ENCODE measurements at regions of chr3 and their contacts with region 1.

Region 1: GRCh38 chr3:129316131-129317013 is 37.7 kb downstream of the HMCES start:
- DNase-seq: peak; percentile 94
- H3K4me3 ChIP-seq: peak overlapping the region; percentile 89 to 93
- H3K27ac ChIP-seq: peak overlapping the region; percentile 70 to 86
- H3K4me1 ChIP-seq: peaks cover 0 to 21% of the 10 kb centered on the region in 2 experiments; a peak in 2 of 4 replicates
- H3K27me3 ChIP-seq: no peaks in the 10 kb centered on the region
- CTCF ChIP-seq: peak; percentile 65
- EP300 ChIP-seq: no peak
- RAD21 ChIP-seq: peak; percentile 40

Region 2: GRCh38 chr3:129278439-129278970 is 37.9 kb before region 1 on chr3 and contains the start of gene HMCES:
- CTCF ChIA-PET with region 1: interaction called, 9 read pairs
- POLR2A ChIA-PET with region 1: interaction called, 25 read pairs
- DNase-seq: peak; percentile 98
- H3K4me3 ChIP-seq: peak within 1 kb of the TSS; percentile 79 to 84
- H3K27ac ChIP-seq: peak within 1 kb of the TSS; percentile 77 to 87
- H3K4me1 ChIP-seq: peaks cover 11 to 14% of the 10 kb centered on the region in 2 experiments; a peak in 2 of 4 replicates
- H3K27me3 ChIP-seq: no peaks in the 10 kb centered on the region
- CTCF ChIP-seq: no peak
- EP300 ChIP-seq: 0 out of 4 replicates have a peak, but pooled peaks of 1 of the 2 experiments have one; percentile 24
- RAD21 ChIP-seq: no peak
- polyA plus RNA-seq, gene HMCES: 29.0 and 32.4 TPM in 2 replicates

Region 3: GRCh38 chr3:129330409-129330808 is 14.0 kb after region 1 on chr3:
- CTCF ChIA-PET with region 1: interaction called, 13 read pairs
- POLR2A ChIA-PET with region 1: interaction called, 6 read pairs
- DNase-seq: no peak
- H3K4me3 ChIP-seq: no peak overlapping the region
- H3K27ac ChIP-seq: no peak overlapping the region
- H3K4me1 ChIP-seq: no peaks in the 10 kb centered on the region
- H3K27me3 ChIP-seq: no peaks in the 10 kb centered on the region
- CTCF ChIP-seq: no peak
- EP300 ChIP-seq: no peak
- RAD21 ChIP-seq: no peak

Region 4: DNA sequence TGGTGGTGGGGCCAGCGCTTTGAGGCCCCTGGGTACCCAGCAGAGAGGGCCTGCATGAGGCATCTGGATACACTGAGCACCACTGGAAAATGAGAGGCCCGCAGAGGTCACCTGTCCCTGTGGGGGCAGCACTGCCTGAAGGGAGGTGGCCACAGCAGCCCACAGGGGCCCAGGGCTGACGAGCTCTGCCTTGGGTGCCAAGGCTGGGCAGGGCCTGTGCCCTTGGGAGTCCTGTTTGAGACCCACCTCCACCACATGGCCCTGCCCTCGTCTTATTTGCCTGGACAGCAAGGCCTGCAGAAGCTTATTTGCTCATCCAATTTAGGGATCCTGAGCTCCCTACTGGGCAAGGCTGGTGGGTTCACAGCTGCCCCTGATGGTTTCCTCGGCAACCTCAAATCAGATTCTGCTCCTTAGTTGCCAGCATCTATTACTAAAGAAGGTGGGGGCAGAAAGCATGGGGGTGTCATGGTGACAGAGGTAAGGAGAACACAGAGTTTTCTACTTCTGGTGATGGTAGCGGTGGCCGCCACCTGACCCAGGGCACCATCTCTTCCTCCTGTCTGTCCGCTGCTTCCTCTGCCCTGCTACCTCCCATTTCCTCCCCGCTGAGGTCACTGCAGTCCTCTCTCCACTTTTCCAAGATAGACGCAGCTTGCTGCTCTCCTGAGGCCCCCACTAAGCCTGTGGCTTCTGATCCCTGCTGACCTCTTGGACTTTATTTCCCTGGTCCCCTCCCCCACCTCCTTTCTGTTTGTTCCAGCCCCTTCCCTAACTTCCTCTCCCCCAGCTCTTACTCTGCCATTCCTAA is 25.2 kb after region 1 on chr3:
- CTCF ChIA-PET with region 1: no interaction called
- POLR2A ChIA-PET with region 1: no interaction called
- DNase-seq: no peak
- H3K4me3 ChIP-seq: no peak overlapping the region
- H3K27ac ChIP-seq: no peak overlapping the region
- H3K4me1 ChIP-seq: peaks cover 0 to 17% of the 10 kb centered on the region in 2 experiments; a peak in 1 of 4 replicates
- H3K27me3 ChIP-seq: no peaks in the 10 kb centered on the region
- CTCF ChIP-seq: no peak
- EP300 ChIP-seq: no peak
- RAD21 ChIP-seq: no peak

Region 5: GRCh38 chr3:129383292-129383860 is 67.0 kb after region 1 on chr3:
- CTCF ChIA-PET with region 1: interaction called, 7 read pairs
- POLR2A ChIA-PET with region 1: interaction called, 22 read pairs
- DNase-seq: peak; percentile 83
- H3K4me3 ChIP-seq: peak overlapping the region in 1 of 2 experiments; percentile 6; a peak in 1 of 4 replicates
- H3K27ac ChIP-seq: no peak overlapping the region
- H3K4me1 ChIP-seq: peaks cover 0 to 15% of the 10 kb centered on the region in 2 experiments; a peak in 1 of 4 replicates
- H3K27me3 ChIP-seq: no peaks in the 10 kb centered on the region
- CTCF ChIP-seq: peak; percentile 75
- EP300 ChIP-seq: no peak
- RAD21 ChIP-seq: peak; percentile 88

Region 6: GRCh38 chr3:129439817-129440617 is 123.6 kb after region 1 on chr3 and contains the starts of genes IFT122 and MBD4:
- CTCF ChIA-PET with region 1: interaction called, 3 read pairs
- POLR2A ChIA-PET with region 1: interaction called, 12 read pairs
- DNase-seq: peak; percentile 97
- H3K4me3 ChIP-seq: peak within 1 kb of the TSS; percentile 82 to 93
- H3K27ac ChIP-seq: peak within 1 kb of the TSS; percentile 83 to 91
- H3K4me1 ChIP-seq: peaks cover 19 to 31% of the 10 kb centered on the region in 2 experiments; a peak in 3 of 4 replicates
- H3K27me3 ChIP-seq: no peaks in the 10 kb centered on the region
- CTCF ChIP-seq: no peak
- EP300 ChIP-seq: no peak
- RAD21 ChIP-seq: no peak
- polyA plus RNA-seq, gene IFT122: 20.1 and 20.8 TPM in 2 replicates
- polyA plus RNA-seq, gene MBD4: 11.1 and 11.7 TPM in 2 replicates

Measured in SK-N-SH (cell line).